Activated CD4-positive, alpha-beta T cell treated with anti-CD3 and anti-CD28 coated beads for 36 hours (primary cell): ENCODE measurements at regions of chr7 and their contacts with region 1.

Region 1: GRCh38 chr7:2757904-2758672 is 70.1 kb downstream of the AMZ1 start:
- DNase-seq: peak; percentile 91
- ATAC-seq: peak; percentile 96
- H3K4me3 Mint-ChIP-seq: peak overlapping the region; percentile 50
- H3K27ac Mint-ChIP-seq: peak overlapping the region; percentile 93
- H3K4me1 Mint-ChIP-seq: peaks cover 43% of the 10 kb centered on the region
- H3K27me3 Mint-ChIP-seq: no peaks in the 10 kb centered on the region

Region 2: GRCh38 chr7:2771274-2771731 is 13.2 kb after region 1 on chr7:
- CTCF ChIA-PET with region 1: interaction called, 8 read pairs
- POLR2A ChIA-PET with region 1: interaction called, 15 read pairs
- intact Hi-C with region 1: loop called (anchors 1 kb)
- DNase-seq: no peak
- ATAC-seq: no peak
- H3K4me3 Mint-ChIP-seq: no peak overlapping the region
- H3K27ac Mint-ChIP-seq: peak overlapping the region; percentile 90
- H3K4me1 Mint-ChIP-seq: peaks cover 40% of the 10 kb centered on the region
- H3K27me3 Mint-ChIP-seq: no peaks in the 10 kb centered on the region

Region 3: DNA sequence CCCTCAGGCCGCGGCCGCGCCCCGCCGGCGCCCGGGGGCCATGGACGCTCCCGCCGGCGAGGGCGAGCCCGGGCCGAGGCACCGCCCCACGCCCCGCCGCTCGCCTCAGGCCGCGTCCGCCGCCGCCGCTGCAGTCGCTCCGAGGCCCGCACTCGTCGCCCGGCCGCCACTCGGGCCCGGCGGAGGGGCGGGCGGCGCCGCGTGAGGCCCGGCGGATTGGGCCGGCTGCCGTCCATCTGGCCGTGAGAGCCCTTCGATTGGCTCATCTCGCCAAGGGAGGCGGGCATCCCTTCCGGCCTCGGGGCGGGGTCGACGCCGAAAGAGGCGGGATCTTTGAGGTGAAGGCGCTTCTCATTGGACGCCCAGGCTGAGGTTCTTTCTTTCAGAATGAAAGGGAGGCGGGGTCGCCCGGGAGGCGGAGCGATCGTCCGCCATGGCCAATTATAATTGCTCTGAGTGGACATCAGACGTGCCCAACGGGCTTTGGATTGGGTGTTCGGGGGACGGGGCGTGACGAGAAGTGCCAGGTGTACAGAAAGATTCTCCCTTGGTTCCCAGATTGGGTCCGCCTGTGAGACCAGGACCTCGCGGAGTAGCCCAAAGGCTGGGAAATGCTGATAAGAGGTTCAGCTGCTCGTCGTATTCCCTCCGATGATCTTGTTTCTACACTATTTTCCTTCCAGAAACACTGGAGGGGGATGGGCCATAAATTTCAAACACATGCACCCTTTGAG is 86.2 kb after region 1 on chr7 and contains the start of gene GNA12:
- CTCF ChIA-PET with region 1: interaction called, 4 read pairs
- POLR2A ChIA-PET with region 1: no interaction called
- intact Hi-C with region 1: loop called (anchors 1 to 5 kb)
- DNase-seq: peak; percentile 99
- ATAC-seq: peak; percentile 96
- H3K4me3 Mint-ChIP-seq: peak within 1 kb of the TSS; percentile 75
- H3K27ac Mint-ChIP-seq: peak within 1 kb of the TSS; percentile 44
- H3K4me1 Mint-ChIP-seq: peaks cover 23% of the 10 kb centered on the region
- H3K27me3 Mint-ChIP-seq: no peaks in the 10 kb centered on the region
- total RNA-seq, gene GNA12: 19.5 to 22.6 TPM

Region 4: DNA sequence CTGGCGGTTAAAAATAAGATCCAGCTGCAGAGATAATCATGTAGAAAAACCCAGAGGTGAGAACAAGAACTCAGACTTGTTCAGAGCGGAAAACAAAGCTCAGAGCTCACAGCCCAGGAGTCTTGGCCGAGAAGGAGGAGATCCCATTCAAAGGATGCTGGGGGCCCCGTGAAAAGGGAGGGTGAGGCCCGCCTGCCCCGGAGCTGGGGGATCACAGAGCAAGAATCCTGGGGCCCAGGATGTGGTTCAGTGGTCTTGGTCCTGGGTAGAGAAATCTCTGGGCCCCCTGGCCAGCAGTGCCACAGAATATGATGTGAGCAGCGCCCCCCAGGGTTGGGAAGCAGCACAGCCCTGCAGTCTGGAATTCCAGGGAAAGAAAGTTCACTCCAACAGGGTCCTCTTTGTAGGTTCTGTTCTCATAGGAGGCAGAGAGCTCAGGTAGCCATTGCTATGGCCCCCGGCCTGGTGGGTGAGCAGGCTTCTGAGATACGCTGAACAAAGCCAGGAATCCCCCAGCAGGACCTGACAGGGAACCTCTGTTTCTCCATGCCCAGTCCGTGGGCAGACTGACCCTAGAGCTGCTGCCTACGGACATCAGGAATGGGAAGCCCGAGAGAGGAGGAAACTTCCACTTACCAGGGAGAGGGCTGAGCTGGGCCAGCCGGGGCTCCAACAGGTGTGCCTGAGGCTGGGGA is 163.7 kb after region 1 on chr7:
- CTCF ChIA-PET with region 1: no interaction called
- POLR2A ChIA-PET with region 1: no interaction called
- intact Hi-C with region 1: no loop called
- DNase-seq: no peak
- ATAC-seq: no peak
- H3K4me3 Mint-ChIP-seq: no peak overlapping the region
- H3K27ac Mint-ChIP-seq: no peak overlapping the region
- H3K4me1 Mint-ChIP-seq: no peaks in the 10 kb centered on the region
- H3K27me3 Mint-ChIP-seq: no peaks in the 10 kb centered on the region

Region 5: GRCh38 chr7:2978403-2978802 is 220.3 kb after region 1 on chr7:
- CTCF ChIA-PET with region 1: no interaction called
- POLR2A ChIA-PET with region 1: no interaction called
- intact Hi-C with region 1: loop called in 1 of 2 experiments (anchors 1 kb)
- DNase-seq: peak; percentile 98
- ATAC-seq: peak; percentile 91
- H3K4me3 Mint-ChIP-seq: peak overlapping the region; percentile 74
- H3K27ac Mint-ChIP-seq: peak overlapping the region; percentile 94
- H3K4me1 Mint-ChIP-seq: peaks cover 75% of the 10 kb centered on the region
- H3K27me3 Mint-ChIP-seq: no peaks in the 10 kb centered on the region

Region 6: GRCh38 chr7:3106361-3106826 is 348.3 kb after region 1 on chr7:
- CTCF ChIA-PET with region 1: no interaction called
- POLR2A ChIA-PET with region 1: no interaction called
- intact Hi-C with region 1: loop called in 1 of 2 experiments (anchors 2 kb)
- DNase-seq: peak; percentile 76
- ATAC-seq: peak; percentile 88
- H3K4me3 Mint-ChIP-seq: no peak overlapping the region
- H3K27ac Mint-ChIP-seq: peak overlapping the region; percentile 86
- H3K4me1 Mint-ChIP-seq: peaks cover 90% of the 10 kb centered on the region
- H3K27me3 Mint-ChIP-seq: no peaks in the 10 kb centered on the region